ENCODE measurements at regions of chr15 and their contacts with region 1.

Region 1: GRCh38 chr15:89998141-89998661 is 2.9 kb upstream of the ZNF710 start:
- DNase-seq: no peak
- ATAC-seq: no peak
- H3K4me3 ChIP-seq: no peak overlapping the region
- H3K4me3 Mint-ChIP-seq: no peak overlapping the region
- H3K27ac ChIP-seq: no peak overlapping the region
- H3K27ac Mint-ChIP-seq: peak overlapping the region in 1 of 2 donors; percentile 34
- H3K4me1 ChIP-seq: peaks cover 10 to 29% of the 10 kb centered on the region in 2 experiments
- H3K4me1 Mint-ChIP-seq: peaks cover 17 to 20% (median 19%) of the 10 kb centered on the region in 3 donors
- H3K27me3 ChIP-seq: no peaks in the 10 kb centered on the region
- H3K27me3 Mint-ChIP-seq: no peaks in the 10 kb centered on the region

Region 2: DNA sequence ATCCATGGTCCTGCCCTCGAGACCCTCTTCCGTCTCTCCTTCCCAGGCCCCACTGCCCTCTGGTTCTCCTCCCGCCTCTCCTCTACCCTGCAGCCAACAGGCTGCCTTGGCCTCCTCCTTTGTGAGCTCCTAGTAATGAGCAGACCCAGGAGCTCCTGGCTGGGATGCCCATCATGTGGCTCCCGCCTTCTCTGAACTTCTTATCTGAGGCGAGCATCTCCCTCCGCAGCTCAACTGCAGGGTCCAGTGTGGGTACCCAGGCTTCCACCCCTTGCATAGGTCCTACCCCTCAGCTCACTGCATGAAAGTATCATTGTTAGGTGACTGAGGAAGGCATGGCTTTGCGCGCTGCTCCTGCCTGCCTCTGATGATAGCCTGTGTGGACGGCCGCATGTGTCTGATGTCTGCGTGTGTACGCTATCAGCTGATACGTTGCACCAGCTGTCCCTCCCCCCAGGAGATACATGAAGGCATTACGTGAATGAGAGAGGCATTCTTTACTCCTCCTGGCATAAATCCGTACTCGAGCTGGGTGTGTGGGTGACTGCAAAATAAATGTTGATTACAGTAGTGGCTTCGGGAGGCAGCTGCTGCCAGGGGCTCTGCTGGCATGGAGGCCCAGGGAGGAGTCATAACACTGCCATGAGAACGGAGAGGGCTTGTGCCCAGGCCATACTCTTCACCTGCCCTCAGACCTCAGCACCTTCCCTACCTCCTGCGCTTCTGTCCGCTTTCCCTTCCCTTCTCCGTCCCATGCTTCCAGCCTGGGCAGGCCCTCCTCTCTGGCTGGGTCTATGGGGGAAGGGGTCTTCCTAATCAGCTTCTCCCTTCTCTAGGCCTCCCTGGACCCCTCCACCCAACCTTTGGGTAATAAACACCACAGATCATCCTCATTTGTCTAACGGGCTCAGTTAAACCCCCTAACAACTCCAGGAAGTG is 51.7 kb after region 1 on chr15:
- CTCF ChIA-PET with region 1: no interaction called
- POLR2A ChIA-PET with region 1: interaction called in 1 of 2 experiments, 12 read pairs
- DNase-seq: no peak
- ATAC-seq: no peak
- H3K4me3 ChIP-seq: no peak overlapping the region
- H3K4me3 Mint-ChIP-seq: no peak overlapping the region
- H3K27ac ChIP-seq: no peak overlapping the region
- H3K27ac Mint-ChIP-seq: peak overlapping the region in 1 of 2 donors; percentile 28
- H3K4me1 ChIP-seq: peaks cover 6 to 8% of the 10 kb centered on the region in 2 experiments
- H3K4me1 Mint-ChIP-seq: peaks cover 19 to 38% (median 20%) of the 10 kb centered on the region in 3 donors
- H3K27me3 ChIP-seq: no peaks in the 10 kb centered on the region
- H3K27me3 Mint-ChIP-seq: no peaks in the 10 kb centered on the region